PC-9 (cell line): ENCODE measurements at regions of chr11 and their contacts with region 1.

Region 1: DNA sequence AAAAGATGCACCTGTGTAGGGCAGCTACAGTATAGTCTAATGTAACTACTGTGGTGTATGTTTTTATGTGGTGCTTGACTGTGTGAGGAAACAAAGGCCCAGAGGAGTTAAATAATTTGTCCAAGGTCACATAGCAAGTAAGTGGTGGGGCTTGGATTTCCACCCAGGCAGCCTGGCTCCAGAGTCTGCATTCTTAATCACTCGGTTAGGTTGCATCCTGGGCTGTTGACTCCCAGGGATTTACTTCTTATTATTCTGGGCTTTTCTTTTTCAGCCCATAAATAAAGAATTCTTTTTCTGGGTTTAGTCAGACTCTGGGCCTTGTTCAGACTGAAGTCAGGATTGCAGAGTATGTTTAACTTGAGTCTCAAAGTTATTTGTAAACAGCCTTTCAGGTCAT is 82.1 kb downstream of the ARHGAP42 start:
- DNase-seq: no peak
- H3K4me3 ChIP-seq: no peak overlapping the region
- H3K27ac ChIP-seq: no peak overlapping the region
- H3K4me1 ChIP-seq: no peaks in the 10 kb centered on the region; the same call in 1 of the 2 replicates
- H3K27me3 ChIP-seq: no peaks in the 10 kb centered on the region
- CTCF ChIP-seq: no peak

Region 2: DNA sequence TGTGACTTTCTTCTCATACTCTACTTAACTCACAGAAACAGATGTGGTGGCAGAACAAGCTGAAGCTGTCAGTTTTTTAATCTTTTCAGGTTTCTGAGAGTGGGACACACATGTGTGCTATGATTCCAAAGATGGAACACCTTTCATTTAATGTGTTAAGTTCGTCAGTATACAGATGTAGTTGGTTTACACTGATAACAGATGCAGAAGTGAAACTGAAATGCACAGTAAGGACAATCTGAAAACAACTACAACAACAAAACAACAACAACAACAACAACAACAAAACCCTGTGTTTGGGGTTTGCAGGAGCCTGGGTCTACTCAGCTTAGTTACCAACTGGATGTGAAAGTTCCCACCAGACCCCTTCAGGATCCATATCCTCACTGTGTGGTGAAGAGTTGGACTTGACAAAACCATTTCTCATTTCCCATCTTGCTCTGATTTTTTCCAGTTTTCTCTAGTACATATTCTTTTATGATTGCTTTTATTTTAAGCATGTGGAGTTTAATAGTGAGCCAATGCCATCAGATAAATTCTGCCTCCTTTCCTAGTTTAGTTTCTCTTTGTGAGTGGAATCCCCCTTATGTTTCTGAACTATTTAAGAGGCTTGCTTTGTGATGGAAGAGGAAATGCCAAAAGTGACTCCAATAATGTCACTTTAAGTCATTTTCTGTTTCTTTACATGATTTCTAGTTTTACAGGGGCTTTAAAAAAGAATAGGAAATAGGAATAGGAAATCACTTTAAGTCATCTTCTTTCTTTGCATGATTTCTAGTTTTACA is 34.2 kb before region 1 on chr11:
- CTCF ChIA-PET with region 1: no interaction called
- POLR2A ChIA-PET with region 1: no interaction called
- intact Hi-C with region 1: no loop called
- DNase-seq: no peak
- H3K4me3 ChIP-seq: no peak overlapping the region
- H3K27ac ChIP-seq: no peak overlapping the region
- H3K4me1 ChIP-seq: peaks cover 31% of the 10 kb centered on the region
- H3K27me3 ChIP-seq: no peaks in the 10 kb centered on the region
- CTCF ChIP-seq: no peak

Region 3: DNA sequence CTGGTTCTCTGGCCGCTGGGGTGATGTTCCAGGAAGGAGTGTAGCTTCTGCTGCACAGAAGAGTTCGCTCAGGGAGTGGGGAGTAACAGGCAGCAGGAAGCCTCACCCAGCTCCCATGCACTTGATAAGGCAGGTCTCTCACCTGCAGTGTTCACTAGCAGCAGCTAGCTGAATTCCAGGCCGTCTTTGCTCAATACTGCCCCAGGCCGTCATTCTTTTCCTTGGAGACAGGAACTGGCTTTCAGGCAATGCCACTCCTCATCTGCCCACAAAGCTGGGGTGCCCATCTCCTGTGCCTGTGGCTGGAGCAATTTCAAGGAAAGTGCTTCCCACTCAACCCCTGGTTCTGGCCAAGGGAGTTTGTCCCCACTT is 16.0 kb before region 1 on chr11:
- CTCF ChIA-PET with region 1: no interaction called
- POLR2A ChIA-PET with region 1: interaction called, 20 read pairs
- intact Hi-C with region 1: no loop called
- DNase-seq: peak; percentile 84 to 98
- H3K4me3 ChIP-seq: no peak overlapping the region; the same call in 1 of the 2 replicates
- H3K27ac ChIP-seq: peak overlapping the region; percentile 76
- H3K4me1 ChIP-seq: peaks cover 33% of the 10 kb centered on the region
- H3K27me3 ChIP-seq: no peaks in the 10 kb centered on the region
- CTCF ChIP-seq: peak; percentile 13; the same call in 1 of the 2 replicates

Region 4: GRCh38 chr11:101049123-101049522 is 280.0 kb after region 1 on chr11:
- CTCF ChIA-PET with region 1: no interaction called
- POLR2A ChIA-PET with region 1: no interaction called
- intact Hi-C with region 1: no loop called
- DNase-seq: peak; percentile 33 to 69
- H3K4me3 ChIP-seq: no peak overlapping the region
- H3K27ac ChIP-seq: no peak overlapping the region
- H3K4me1 ChIP-seq: no peaks in the 10 kb centered on the region
- H3K27me3 ChIP-seq: no peaks in the 10 kb centered on the region
- CTCF ChIP-seq: no peak

Region 5: GRCh38 chr11:101296896-101297295 is 527.7 kb after region 1 on chr11:
- CTCF ChIA-PET with region 1: no interaction called
- POLR2A ChIA-PET with region 1: no interaction called
- intact Hi-C with region 1: no loop called
- DNase-seq: peak; percentile 53 to 59
- H3K4me3 ChIP-seq: no peak overlapping the region
- H3K27ac ChIP-seq: no peak overlapping the region
- H3K4me1 ChIP-seq: no peaks in the 10 kb centered on the region
- H3K27me3 ChIP-seq: no peaks in the 10 kb centered on the region
- CTCF ChIP-seq: no peak